Right cardiac atrium (tissue), 5 donors: ENCODE measurements at regions of chr14 and their contacts with region 1.

Region 1: DNA sequence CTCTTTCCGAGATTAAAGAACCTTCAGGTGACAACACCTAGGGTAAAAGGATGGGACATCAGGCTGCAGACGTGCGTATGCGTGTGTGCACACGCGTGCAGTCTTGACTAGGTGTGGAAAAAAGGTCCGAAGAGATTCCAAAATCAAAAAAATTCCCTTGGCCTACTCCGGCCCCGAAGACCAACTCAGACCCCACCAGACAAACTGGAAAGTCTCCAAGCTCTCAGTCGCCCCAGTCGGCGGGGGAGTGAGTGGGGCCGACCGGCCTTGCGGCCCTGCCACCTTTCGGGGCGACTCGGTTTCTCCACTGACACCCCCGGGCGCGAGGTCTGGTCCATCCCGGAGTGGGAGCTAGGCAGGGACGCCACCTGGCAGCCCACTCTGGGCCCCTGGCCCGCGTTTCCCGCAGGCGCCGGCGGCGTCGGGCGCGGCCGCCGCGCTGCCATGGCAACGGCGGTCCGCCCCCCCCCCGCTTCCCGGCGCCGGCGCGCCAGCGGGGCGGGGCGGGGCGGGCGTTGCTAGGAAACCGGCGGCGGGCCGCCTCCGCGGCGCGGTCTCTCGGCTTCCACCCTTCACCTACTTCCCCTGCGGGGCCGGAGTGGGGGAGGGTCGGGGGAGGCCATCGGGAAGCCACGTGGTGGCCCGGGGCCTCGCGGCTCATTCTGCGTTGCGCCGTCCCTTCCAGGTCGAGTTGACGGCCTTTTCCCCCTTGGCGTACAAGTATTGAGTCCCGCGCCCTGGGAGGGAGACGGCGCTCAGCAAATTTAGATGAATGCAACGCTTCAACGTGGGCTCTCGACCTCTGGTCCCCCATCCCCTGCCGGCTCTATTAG is 253.1 kb downstream of the EFCAB11 start:
- DNase-seq: peak; percentile 92 to 97 (median 96)
- ATAC-seq: peak; percentile 95 to 96
- H3K4me3 ChIP-seq: peak overlapping the region; percentile 87
- H3K27ac ChIP-seq: peak overlapping the region; percentile 79
- H3K4me1 ChIP-seq: peaks cover 4% of the 10 kb centered on the region
- H3K27me3 ChIP-seq: no peaks in the 10 kb centered on the region

Region 2: GRCh38 chr14:89618811-89619551 is 82.4 kb before region 1 on chr14:
- intact Hi-C with region 1: loop called in 2 of 4 experiments (anchors 5 to 10 kb)
- DNase-seq: peak; percentile 82 to 92 (median 90)
- ATAC-seq: peak; percentile 95 to 96
- H3K4me3 ChIP-seq: peak overlapping the region; percentile 95
- H3K27ac ChIP-seq: peak overlapping the region; percentile 76
- H3K4me1 ChIP-seq: peaks cover 3% of the 10 kb centered on the region
- H3K27me3 ChIP-seq: no peaks in the 10 kb centered on the region

Region 3: GRCh38 chr14:89625244-89625713 is 76.1 kb before region 1 on chr14:
- intact Hi-C with region 1: loop called in 3 of 4 experiments (anchors 5 to 10 kb)
- DNase-seq: peak; percentile 59 to 84 (median 81)
- ATAC-seq: peak; percentile 60 to 77
- H3K4me3 ChIP-seq: no peak overlapping the region
- H3K27ac ChIP-seq: no peak overlapping the region
- H3K4me1 ChIP-seq: no peaks in the 10 kb centered on the region
- H3K27me3 ChIP-seq: no peaks in the 10 kb centered on the region

Region 4: DNA sequence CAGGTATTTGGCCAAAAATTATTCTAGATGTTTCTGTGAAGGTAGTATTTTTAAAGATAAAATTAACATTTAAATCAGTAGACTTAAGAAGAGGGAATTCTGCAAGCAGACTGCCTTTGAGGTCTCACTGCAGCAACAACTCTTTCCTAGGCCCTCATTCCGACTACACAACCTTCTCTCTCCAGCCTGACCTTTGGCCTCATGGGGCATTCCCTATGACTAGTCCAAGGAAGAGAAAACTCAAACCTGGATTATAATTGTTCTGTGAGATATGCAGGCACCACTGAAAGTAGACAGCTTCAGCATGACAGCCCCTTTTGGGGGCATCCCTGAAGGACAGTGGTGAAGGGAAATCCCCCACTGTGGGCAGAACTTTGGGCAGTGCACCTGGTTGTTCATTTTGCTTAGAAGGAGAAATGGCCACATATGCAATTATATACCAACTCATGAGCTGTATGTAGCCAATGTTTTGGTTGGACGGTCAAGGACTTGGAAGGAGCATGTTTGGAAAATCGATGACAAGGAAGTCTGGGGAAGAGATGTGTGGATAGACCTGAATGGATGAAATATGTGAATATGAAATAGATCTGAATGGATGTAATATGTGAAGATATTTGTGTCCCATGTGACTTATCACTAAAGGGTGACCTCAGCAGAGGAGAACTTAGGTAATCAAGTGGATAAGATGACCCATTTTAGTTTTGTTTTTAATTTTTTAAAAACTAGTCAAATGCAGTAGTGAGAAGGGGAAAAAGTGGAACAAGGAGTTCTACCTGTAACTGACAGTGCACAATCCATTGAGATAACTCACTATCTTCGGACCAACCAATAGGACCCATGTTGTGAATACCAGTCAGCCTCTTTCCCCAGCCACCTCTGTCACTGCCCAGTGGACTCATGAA is 51.1 kb before region 1 on chr14:
- intact Hi-C with region 1: no loop called
- DNase-seq: no peak
- ATAC-seq: no peak
- H3K4me3 ChIP-seq: no peak overlapping the region
- H3K27ac ChIP-seq: no peak overlapping the region
- H3K4me1 ChIP-seq: no peaks in the 10 kb centered on the region
- H3K27me3 ChIP-seq: no peaks in the 10 kb centered on the region

Region 5: GRCh38 chr14:89957791-89958190 is 256.4 kb after region 1 on chr14:
- intact Hi-C with region 1: no loop called
- DNase-seq: no peak
- ATAC-seq: no peak
- H3K4me3 ChIP-seq: no peak overlapping the region
- H3K27ac ChIP-seq: no peak overlapping the region
- H3K4me1 ChIP-seq: peaks cover 6% of the 10 kb centered on the region
- H3K27me3 ChIP-seq: no peaks in the 10 kb centered on the region